ENCODE measurements at regions of chr12 and their contacts with region 1.

Region 1: GRCh38 chr12:12456637-12457036 is 99.8 kb downstream of the BORCS5 start:
- DNase-seq: peak in 3 of 14 experiments; percentile 61 to 67 (median 63)
- ATAC-seq: peak; percentile 74
- H3K4me3 ChIP-seq: peak overlapping the region; percentile 29
- H3K4me3 Mint-ChIP-seq: peak overlapping the region; percentile 68
- H3K27ac ChIP-seq: peak overlapping the region in 1 of 2 donors; percentile 68
- H3K27ac Mint-ChIP-seq: peak overlapping the region; percentile 85
- H3K4me1 ChIP-seq: peaks cover 18% of the 10 kb centered on the region
- H3K4me1 Mint-ChIP-seq: peaks cover 42% of the 10 kb centered on the region
- H3K27me3 ChIP-seq: no peaks in the 10 kb centered on the region
- H3K27me3 Mint-ChIP-seq: no peaks in the 10 kb centered on the region
- CTCF ChIP-seq: no peak

Region 2: GRCh38 chr12:12474931-12475795 is 18.5 kb after region 1 on chr12:
- CTCF ChIA-PET with region 1: interaction called, 3 read pairs
- POLR2A ChIA-PET with region 1: interaction called, 22 read pairs
- intact Hi-C with region 1: no loop called
- DNase-seq: peak in 12 of 14 experiments; percentile 18 to 89 (median 44)
- ATAC-seq: peak; percentile 84
- H3K4me3 ChIP-seq: peak overlapping the region; percentile 38
- H3K4me3 Mint-ChIP-seq: peak overlapping the region; percentile 59
- H3K27ac ChIP-seq: peak overlapping the region; percentile 55 to 91
- H3K27ac Mint-ChIP-seq: peak overlapping the region; percentile 93
- H3K4me1 ChIP-seq: peaks cover 50% of the 10 kb centered on the region
- H3K4me1 Mint-ChIP-seq: peaks cover 57% of the 10 kb centered on the region
- H3K27me3 ChIP-seq: no peaks in the 10 kb centered on the region
- H3K27me3 Mint-ChIP-seq: no peaks in the 10 kb centered on the region
- CTCF ChIP-seq: no peak